ENCODE measurements at regions of chr6 and their contacts with region 1.

Region 1: DNA sequence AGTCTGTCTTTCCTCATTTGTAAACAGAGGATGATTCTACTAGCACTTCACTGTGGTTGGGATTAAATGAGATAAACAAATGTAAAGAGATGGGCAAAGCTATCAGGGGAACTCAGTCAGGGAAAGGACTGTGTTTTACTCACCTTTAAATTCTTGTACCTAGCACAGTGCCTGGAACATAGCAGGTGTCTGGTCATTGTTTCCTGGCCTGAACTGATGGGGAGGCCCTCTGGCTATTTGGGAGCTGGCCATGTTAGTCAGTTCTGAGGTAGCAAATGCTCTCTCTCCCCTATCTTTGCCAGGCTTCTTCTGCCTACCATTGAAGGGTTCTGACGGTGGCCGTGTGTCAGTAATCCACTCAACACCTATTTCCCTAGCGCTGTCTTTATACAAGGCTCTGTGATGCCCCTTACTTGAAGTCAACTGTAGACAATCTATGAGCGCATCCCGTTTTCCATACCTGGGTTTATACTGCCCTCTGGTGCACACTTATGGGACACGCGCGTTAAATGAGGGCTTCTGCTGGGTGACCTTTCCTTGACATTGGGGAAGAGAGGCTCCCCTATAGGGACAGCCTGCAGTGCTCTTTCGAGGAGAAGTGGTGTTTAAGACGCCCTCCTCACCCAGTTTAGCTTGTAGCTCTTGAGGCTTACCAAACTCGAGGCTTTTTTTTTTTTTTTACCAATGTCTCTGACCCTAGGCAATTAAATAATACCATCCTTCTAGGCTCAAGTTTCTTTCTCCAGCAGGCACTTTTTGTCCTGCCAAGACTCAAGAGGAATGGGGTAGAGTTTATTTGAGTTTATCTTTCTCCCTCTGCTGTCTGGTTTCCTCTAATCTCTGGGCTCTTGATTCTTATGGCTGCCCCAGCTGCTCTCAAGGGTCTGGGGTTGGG is 4.0 kb upstream of the SPATS1 start:
- DNase-seq: peak; percentile 59 to 81
- H3K4me3 ChIP-seq: no peak overlapping the region
- H3K27ac ChIP-seq: no peak overlapping the region
- H3K4me1 ChIP-seq: peaks cover 0 to 5% (median under 1%) of the 10 kb centered on the region in 4 experiments; a peak in 3 of 7 replicates
- H3K27me3 ChIP-seq: peaks cover 3 to 6% (median 5%) of the 10 kb centered on the region in 4 experiments; a peak in 5 of 7 replicates
- CTCF ChIP-seq: peak; percentile 73 to 87 (median 85)
- EP300 ChIP-seq: no peak
- POLR2A ChIP-seq: no peak
- RAD21 ChIP-seq: peak; percentile 94 to 96

Region 2: GRCh38 chr6:44257025-44257752 is 81.3 kb before region 1 on chr6 and contains the start of gene SLC35B2:
- CTCF ChIA-PET with region 1: interaction called, 7 read pairs
- POLR2A ChIA-PET with region 1: interaction called, 41 read pairs
- DNase-seq: peak in 1 of 2 experiments; percentile 85
- H3K4me3 ChIP-seq: peak within 1 kb of the TSS; percentile 67 to 85 (median 75)
- H3K27ac ChIP-seq: peak within 1 kb of the TSS; percentile 88
- H3K4me1 ChIP-seq: peaks cover 1 to 20% (median 7%) of the 10 kb centered on the region in 4 experiments; a peak in 6 of 7 replicates
- H3K27me3 ChIP-seq: no peaks in the 10 kb centered on the region
- CTCF ChIP-seq: peak in 2 of 3 experiments; percentile 70 to 91; a peak in 3 of 4 replicates
- EP300 ChIP-seq: peak; percentile 21 to 23; a peak in 2 of 3 replicates
- POLR2A ChIP-seq: peak in 1 of 2 experiments; percentile 67; a peak in 1 of 3 replicates
- RAD21 ChIP-seq: peak; percentile 6 to 59; a peak in 3 of 4 replicates
- total RNA-seq, gene SLC35B2: 29.5 and 32.3 TPM in 2 replicates

Region 3: DNA sequence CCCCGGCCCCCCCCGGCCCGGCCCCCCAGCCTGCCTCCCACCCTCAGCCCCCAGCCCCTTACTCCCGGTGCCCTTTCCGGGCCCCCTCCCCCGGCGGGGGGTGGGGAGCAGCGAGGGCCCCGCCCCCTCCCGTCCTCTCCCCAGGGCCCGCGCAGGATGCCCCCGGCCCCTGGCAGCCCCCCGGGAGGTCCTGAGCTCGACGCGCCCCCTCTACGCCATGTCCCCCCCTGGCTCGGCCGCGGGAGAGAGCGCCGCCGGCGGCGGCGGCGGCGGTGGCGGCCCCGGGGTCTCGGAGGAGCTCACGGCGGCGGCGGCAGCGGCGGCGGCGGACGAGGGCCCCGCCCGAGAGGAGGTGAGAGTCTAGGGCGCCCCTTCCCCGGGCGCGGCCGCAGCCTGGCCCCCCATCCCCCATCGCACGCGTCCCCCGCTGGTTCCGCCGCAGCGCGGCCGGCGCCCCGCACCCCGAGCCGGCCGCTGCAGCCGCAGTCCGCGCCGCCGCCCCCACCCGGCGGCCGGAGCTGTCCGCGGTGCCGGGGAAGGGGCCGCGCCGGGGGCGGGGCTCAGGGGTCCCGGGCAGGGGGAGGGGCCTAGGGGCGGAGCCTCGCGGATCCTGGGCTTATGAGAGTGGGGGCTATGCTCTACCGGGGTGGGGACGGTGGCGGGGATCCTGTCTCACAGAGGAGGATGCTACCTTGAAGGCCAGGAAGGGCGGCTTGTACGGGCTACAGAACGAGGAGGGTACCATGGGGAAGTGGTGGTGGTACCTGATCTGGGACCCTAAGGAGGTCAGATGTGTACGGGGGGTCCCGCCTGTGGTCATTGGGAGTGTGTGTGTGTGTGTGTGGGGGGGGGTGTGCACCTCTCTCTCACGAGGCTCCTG is 67.7 kb before region 1 on chr6:
- CTCF ChIA-PET with region 1: interaction called, 153 read pairs
- POLR2A ChIA-PET with region 1: interaction called, 11 read pairs
- DNase-seq: peak in 1 of 2 experiments; percentile 90
- H3K4me3 ChIP-seq: peak overlapping the region; percentile 33 to 60 (median 46)
- H3K27ac ChIP-seq: no peak overlapping the region
- H3K4me1 ChIP-seq: peaks cover 12 to 33% (median 14%) of the 10 kb centered on the region in 4 experiments
- H3K27me3 ChIP-seq: peaks cover 0 to 3% (median 1%) of the 10 kb centered on the region in 4 experiments; a peak in 2 of 7 replicates
- CTCF ChIP-seq: no peak
- EP300 ChIP-seq: no peak
- POLR2A ChIP-seq: no peak
- RAD21 ChIP-seq: no peak

Region 4: DNA sequence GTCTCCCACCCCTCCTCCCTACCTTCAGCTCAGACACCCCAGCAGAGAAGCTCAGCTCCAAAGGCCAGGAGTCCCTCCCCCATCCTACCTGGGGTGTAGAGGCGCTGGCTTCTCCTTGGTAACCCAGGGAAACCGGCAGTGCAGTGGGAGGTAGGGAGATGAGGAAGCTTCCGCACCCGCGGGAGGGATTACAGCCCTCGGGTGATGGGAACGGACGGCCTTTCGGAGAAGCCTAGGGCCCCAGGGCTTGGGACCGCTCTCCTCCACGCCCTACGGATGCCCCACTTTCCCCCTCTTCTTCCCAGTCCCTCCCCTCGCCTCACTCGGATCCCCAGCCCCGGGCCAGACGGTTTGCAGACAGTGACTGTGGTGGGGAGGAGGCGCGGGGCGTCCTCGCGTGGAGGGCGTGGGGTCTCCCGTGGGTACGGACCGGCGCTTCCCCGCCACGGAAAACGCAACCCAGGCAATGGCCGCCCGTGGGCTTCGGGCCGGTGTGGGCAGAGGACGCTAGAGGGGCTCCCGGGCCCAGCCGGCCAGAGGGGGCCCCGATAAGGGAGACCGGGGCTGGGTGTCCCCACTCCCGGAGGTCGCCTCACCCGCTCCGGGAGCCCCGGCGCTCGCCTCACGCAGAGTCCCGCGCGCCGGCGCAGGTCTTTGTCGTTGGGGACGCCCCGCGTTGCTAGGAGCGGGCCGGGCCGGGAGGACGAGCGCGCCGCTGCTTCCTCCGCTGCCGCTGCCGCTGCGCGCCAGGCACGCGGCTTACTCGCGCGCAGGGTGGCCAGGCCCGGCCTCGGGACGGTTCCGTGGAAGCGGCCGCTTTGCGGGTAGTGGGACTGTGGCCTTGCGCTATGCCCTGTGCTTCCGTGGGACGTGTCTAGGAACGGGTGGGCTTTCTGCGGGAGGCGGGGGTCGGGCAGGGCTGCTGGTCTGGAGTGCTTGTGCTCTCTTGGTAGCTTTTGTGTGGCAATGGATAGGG is 41.1 kb before region 1 on chr6:
- CTCF ChIA-PET with region 1: interaction called, 108 read pairs
- POLR2A ChIA-PET with region 1: interaction called, 10 read pairs
- DNase-seq: peak in 1 of 2 experiments; percentile 87
- H3K4me3 ChIP-seq: peak overlapping the region; percentile 44 to 83 (median 68)
- H3K27ac ChIP-seq: no peak overlapping the region
- H3K4me1 ChIP-seq: peaks cover 0 to 5% (median 4%) of the 10 kb centered on the region in 4 experiments; a peak in 4 of 7 replicates
- H3K27me3 ChIP-seq: peaks cover 0 to 19% (median 14%) of the 10 kb centered on the region in 4 experiments; a peak in 6 of 7 replicates
- CTCF ChIP-seq: no peak
- EP300 ChIP-seq: no peak
- POLR2A ChIP-seq: peak in 1 of 2 experiments; percentile 38; a peak in 1 of 3 replicates
- RAD21 ChIP-seq: no peak

Region 5: GRCh38 chr6:44304282-44305199 is 33.9 kb before region 1 on chr6:
- CTCF ChIA-PET with region 1: interaction called, 108 read pairs
- POLR2A ChIA-PET with region 1: interaction called, 3 read pairs
- DNase-seq: peak in 1 of 2 experiments; percentile 80
- H3K4me3 ChIP-seq: no peak overlapping the region
- H3K27ac ChIP-seq: no peak overlapping the region
- H3K4me1 ChIP-seq: peaks cover 0 to 4% (median 0%) of the 10 kb centered on the region in 4 experiments; a peak in 1 of 7 replicates
- H3K27me3 ChIP-seq: no peaks in the 10 kb centered on the region
- CTCF ChIP-seq: peak in 2 of 3 experiments; percentile 88 to 95; a peak in 3 of 4 replicates
- EP300 ChIP-seq: no peak
- POLR2A ChIP-seq: no peak
- RAD21 ChIP-seq: peak; percentile 72 to 77

Region 6: GRCh38 chr6:44312901-44313788 is 25.3 kb before region 1 on chr6 and contains the start of gene AARS2:
- CTCF ChIA-PET with region 1: interaction called, 108 read pairs
- POLR2A ChIA-PET with region 1: interaction called, 7 read pairs
- DNase-seq: peak; percentile 68 to 99
- H3K4me3 ChIP-seq: peak within 1 kb of the TSS; percentile 66 to 91 (median 88)
- H3K27ac ChIP-seq: peak within 1 kb of the TSS; percentile 64; the same call in 1 of the 2 replicates
- H3K4me1 ChIP-seq: peaks cover 3 to 6% (median 3%) of the 10 kb centered on the region in 4 experiments
- H3K27me3 ChIP-seq: peaks cover 0 to 1% (median 0%) of the 10 kb centered on the region in 4 experiments; a peak in 1 of 7 replicates
- CTCF ChIP-seq: peak; percentile 91 to 97 (median 95)
- EP300 ChIP-seq: peak in 1 of 2 experiments; percentile 21; a peak in 1 of 3 replicates
- POLR2A ChIP-seq: peak; percentile 94 to 98
- RAD21 ChIP-seq: peak; percentile 5 to 36; a peak in 2 of 4 replicates
- total RNA-seq, gene AARS2: 19.9 and 20.4 TPM in 2 replicates

Region 7: GRCh38 chr6:44327096-44327495 is 11.4 kb before region 1 on chr6:
- CTCF ChIA-PET with region 1: interaction called, 14 read pairs
- POLR2A ChIA-PET with region 1: interaction called, 4 read pairs
- DNase-seq: no peak
- H3K4me3 ChIP-seq: no peak overlapping the region
- H3K27ac ChIP-seq: no peak overlapping the region
- H3K4me1 ChIP-seq: peaks cover 0 to 11% (median 6%) of the 10 kb centered on the region in 4 experiments; a peak in 4 of 7 replicates
- H3K27me3 ChIP-seq: no peaks in the 10 kb centered on the region; a peak in 1 of 7 replicates
- CTCF ChIP-seq: no peak
- EP300 ChIP-seq: no peak
- POLR2A ChIP-seq: no peak
- RAD21 ChIP-seq: no peak

Region 8: GRCh38 chr6:44397424-44398164 is 59.1 kb after region 1 on chr6:
- CTCF ChIA-PET with region 1: no interaction called
- POLR2A ChIA-PET with region 1: no interaction called
- DNase-seq: no peak
- H3K4me3 ChIP-seq: no peak overlapping the region
- H3K27ac ChIP-seq: no peak overlapping the region
- H3K4me1 ChIP-seq: no peaks in the 10 kb centered on the region
- H3K27me3 ChIP-seq: no peaks in the 10 kb centered on the region
- CTCF ChIP-seq: no peak
- EP300 ChIP-seq: no peak
- POLR2A ChIP-seq: no peak
- RAD21 ChIP-seq: no peak

Region 9: DNA sequence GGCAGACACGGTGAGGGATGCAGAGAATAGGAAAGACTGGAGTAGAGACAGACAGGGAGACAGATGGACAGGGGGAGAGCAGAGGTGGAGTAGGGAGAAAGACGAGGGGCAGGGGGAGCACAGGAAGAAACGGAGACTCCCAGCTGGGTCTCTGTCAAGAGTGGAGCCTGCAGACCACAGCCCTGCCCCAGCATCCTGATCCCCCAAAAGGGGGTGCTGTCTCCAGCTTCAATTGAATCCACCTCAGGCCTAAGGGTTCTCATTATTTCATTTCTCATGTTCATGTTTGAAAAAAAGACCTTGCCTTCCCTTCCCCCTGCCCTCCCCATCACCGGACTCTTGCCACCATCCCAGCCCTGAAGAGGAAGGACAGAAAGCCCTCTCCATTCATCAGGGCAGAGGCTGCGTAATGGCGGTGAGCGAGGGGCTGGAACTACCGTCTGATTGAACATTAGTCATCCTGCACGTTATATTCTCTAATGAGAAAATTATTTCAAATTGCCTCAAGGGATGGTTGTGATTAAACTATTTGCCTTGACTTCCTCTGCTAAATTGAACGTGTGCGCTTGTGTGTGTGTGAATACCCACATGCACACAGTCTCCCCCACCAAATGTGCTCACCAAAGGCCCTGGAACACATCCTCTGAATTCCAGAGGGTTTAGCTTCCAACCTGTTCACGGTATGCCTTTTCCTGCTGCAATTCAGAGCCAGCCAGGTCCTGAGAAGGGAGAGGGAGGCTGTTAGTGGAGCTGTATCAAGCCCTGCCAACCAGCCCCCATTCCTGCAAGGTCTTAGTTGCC is 147.3 kb after region 1 on chr6:
- CTCF ChIA-PET with region 1: no interaction called
- POLR2A ChIA-PET with region 1: no interaction called
- DNase-seq: no peak
- H3K4me3 ChIP-seq: no peak overlapping the region
- H3K27ac ChIP-seq: no peak overlapping the region
- H3K4me1 ChIP-seq: peaks cover 0 to 4% (median 3%) of the 10 kb centered on the region in 4 experiments; a peak in 6 of 7 replicates
- H3K27me3 ChIP-seq: no peaks in the 10 kb centered on the region; a peak in 1 of 7 replicates
- CTCF ChIP-seq: peak; percentile 27 to 54 (median 30); a peak in 3 of 4 replicates
- EP300 ChIP-seq: no peak
- POLR2A ChIP-seq: no peak
- RAD21 ChIP-seq: peak; percentile 20 to 45; a peak in 2 of 4 replicates

Region 10: GRCh38 chr6:44980841-44981240 is 642.4 kb after region 1 on chr6:
- CTCF ChIA-PET with region 1: no interaction called
- POLR2A ChIA-PET with region 1: no interaction called
- DNase-seq: no peak
- H3K4me3 ChIP-seq: no peak overlapping the region
- H3K27ac ChIP-seq: no peak overlapping the region
- H3K4me1 ChIP-seq: no peaks in the 10 kb centered on the region
- H3K27me3 ChIP-seq: no peaks in the 10 kb centered on the region
- CTCF ChIP-seq: no peak
- EP300 ChIP-seq: no peak
- POLR2A ChIP-seq: no peak
- RAD21 ChIP-seq: no peak

Measured in H1 (cell line).